HEK293 (cell line): ENCODE measurements at regions of chr9 and their contacts with region 1.

Region 1: GRCh38 chr9:121185774-121186403 is 15.8 kb downstream of the RAB14 start:
- H3K4me3 ChIP-seq: no peak overlapping the region
- H3K27ac ChIP-seq: no peak overlapping the region
- H3K4me1 ChIP-seq: peaks cover 12% of the 10 kb centered on the region
- CTCF ChIP-seq: no peak

Region 2: DNA sequence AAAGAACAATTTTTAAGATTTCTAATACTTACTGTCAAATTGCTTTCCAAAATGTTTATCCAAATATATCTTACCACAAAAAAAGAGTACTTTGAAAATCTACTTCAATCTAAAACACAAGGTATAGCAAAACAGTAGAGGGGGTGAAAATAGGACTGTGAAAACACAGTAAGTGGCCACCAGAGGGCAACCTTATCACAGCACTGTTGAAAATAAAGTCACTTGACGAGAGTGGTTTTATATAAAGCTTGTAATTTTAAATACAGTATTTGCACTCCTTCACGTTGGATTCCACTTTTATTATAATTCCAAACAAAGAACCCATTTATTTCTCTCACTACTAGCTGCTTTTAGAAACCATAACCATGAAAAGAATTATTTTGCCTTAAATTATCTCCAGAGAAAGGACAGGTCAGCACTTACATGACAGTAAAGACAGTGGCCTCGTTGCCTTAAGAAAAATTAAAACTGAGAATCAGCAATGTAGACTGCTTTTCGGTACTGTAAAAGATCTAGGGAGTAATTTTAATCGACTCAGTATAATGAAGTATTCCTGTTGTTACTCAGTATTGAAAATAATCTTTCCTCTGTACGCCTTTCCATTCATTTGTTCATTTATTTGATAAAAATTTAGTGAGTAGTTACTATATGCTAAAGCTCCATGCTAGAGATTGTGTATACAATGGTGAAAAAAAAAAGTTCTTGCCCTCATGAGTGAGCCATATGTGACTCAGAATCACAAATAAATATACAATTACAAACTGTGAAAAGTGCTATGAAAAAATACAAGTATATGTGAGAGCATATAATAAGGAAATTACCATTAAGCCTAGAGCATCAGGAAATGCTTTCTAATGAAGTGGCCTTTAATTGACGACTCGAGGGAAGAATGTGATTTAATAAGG is 565.9 kb before region 1 on chr9:
- CTCF ChIA-PET with region 1: no interaction called
- POLR2A ChIA-PET with region 1: no interaction called
- H3K4me3 ChIP-seq: no peak overlapping the region
- H3K27ac ChIP-seq: no peak overlapping the region
- H3K4me1 ChIP-seq: peaks cover 3% of the 10 kb centered on the region; the same call in 1 of the 2 replicates
- CTCF ChIP-seq: 0 out of 2 replicates have a peak, but pooled peaks have one; percentile 27

Region 3: GRCh38 chr9:121393318-121393717 is 207.4 kb after region 1 on chr9:
- CTCF ChIA-PET with region 1: no interaction called
- POLR2A ChIA-PET with region 1: interaction called, 11 read pairs
- H3K4me3 ChIP-seq: no peak overlapping the region
- H3K27ac ChIP-seq: no peak overlapping the region
- H3K4me1 ChIP-seq: no peaks in the 10 kb centered on the region
- CTCF ChIP-seq: no peak